ENCODE measurements at regions of chr20 and their contacts with region 1.

Region 1: GRCh38 chr20:63537525-63538203 is 488 bp upstream of the PTK6 start:
- DNase-seq: peak; percentile 97
- H3K4me3 ChIP-seq: peak overlapping the region in 1 of 2 experiments; percentile 29; a peak in 2 of 4 replicates
- H3K27ac ChIP-seq: peak overlapping the region in 1 of 2 experiments; percentile 76; a peak in 2 of 4 replicates
- H3K4me1 ChIP-seq: peaks cover 0 to 32% of the 10 kb centered on the region in 2 experiments; a peak in 1 of 4 replicates
- H3K27me3 ChIP-seq: no peaks in the 10 kb centered on the region
- CTCF ChIP-seq: peak; percentile 81
- EP300 ChIP-seq: no peak
- RAD21 ChIP-seq: peak; percentile 93

Region 2: GRCh38 chr20:62989201-62989601 is 548.5 kb before region 1 on chr20:
- CTCF ChIA-PET with region 1: no interaction called
- POLR2A ChIA-PET with region 1: no interaction called
- DNase-seq: no peak
- H3K4me3 ChIP-seq: peak overlapping the region in 1 of 2 experiments; percentile 3; a peak in 1 of 4 replicates
- H3K27ac ChIP-seq: no peak overlapping the region
- H3K4me1 ChIP-seq: no peaks in the 10 kb centered on the region
- H3K27me3 ChIP-seq: peaks cover 42% of the 10 kb centered on the region
- CTCF ChIP-seq: no peak
- EP300 ChIP-seq: no peak
- RAD21 ChIP-seq: no peak

Region 3: GRCh38 chr20:63129991-63130657 is 407.5 kb before region 1 on chr20:
- CTCF ChIA-PET with region 1: no interaction called
- POLR2A ChIA-PET with region 1: no interaction called
- DNase-seq: no peak
- H3K4me3 ChIP-seq: no peak overlapping the region
- H3K27ac ChIP-seq: no peak overlapping the region
- H3K4me1 ChIP-seq: no peaks in the 10 kb centered on the region
- H3K27me3 ChIP-seq: peaks cover 34% of the 10 kb centered on the region
- CTCF ChIP-seq: no peak
- EP300 ChIP-seq: no peak
- RAD21 ChIP-seq: no peak

Region 4: DNA sequence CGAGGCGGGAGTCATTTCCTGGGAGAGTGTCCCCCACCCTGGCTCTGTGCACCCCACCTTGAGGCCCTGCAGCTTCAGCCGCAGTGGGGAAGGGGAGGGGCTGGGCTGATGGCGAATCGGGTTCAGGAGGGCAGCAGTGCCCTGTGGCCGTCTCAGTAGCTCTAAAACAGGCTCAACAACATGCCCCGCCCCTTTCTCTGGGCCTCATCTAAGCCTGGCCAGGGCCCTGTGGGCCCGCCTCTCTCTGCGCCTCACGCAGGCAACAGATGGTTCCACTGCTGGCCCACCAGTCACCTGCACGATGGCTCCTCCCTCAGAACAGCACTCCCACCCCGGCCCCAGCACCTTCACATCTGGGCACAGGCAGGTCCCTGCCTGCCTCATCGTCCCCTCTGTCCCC is 206.7 kb before region 1 on chr20:
- CTCF ChIA-PET with region 1: no interaction called
- POLR2A ChIA-PET with region 1: no interaction called
- DNase-seq: no peak
- H3K4me3 ChIP-seq: no peak overlapping the region
- H3K27ac ChIP-seq: no peak overlapping the region
- H3K4me1 ChIP-seq: peaks cover 0 to 3% of the 10 kb centered on the region in 2 experiments; a peak in 1 of 4 replicates
- H3K27me3 ChIP-seq: no peaks in the 10 kb centered on the region
- CTCF ChIP-seq: no peak
- EP300 ChIP-seq: no peak
- RAD21 ChIP-seq: no peak

Region 5: DNA sequence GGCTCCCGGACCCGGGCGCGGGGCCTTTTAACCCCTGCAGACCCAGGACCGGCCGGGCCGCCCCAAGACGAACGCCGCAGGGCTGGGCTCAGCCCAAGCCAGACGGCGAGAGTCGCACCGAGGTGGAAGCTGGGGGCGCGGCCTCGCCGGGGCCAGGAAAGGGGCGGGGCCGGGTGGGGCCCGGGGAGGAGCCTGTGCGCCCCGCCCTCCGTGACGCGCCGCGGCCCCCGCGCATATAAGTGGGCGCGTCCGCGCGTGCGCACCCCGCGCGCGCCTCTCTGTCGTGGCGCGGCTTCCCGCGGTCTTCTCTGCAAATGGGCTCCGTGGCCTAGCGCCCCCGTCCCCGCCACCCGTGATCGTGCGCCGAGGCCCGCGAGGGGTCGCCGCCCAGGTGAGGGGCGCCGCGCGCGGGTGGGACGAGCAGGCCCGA is 17.1 kb before region 1 on chr20 and contains the start of gene PPDPF:
- CTCF ChIA-PET with region 1: interaction called, 82 read pairs
- POLR2A ChIA-PET with region 1: interaction called, 16 read pairs
- DNase-seq: peak; percentile 100
- H3K4me3 ChIP-seq: peak within 1 kb of the TSS; percentile 84 to 85
- H3K27ac ChIP-seq: peak within 1 kb of the TSS; percentile 66 to 81
- H3K4me1 ChIP-seq: peaks cover 4 to 26% of the 10 kb centered on the region in 2 experiments; a peak in 3 of 4 replicates
- H3K27me3 ChIP-seq: no peaks in the 10 kb centered on the region
- CTCF ChIP-seq: no peak
- EP300 ChIP-seq: no peak
- RAD21 ChIP-seq: no peak
- polyA plus RNA-seq, gene PPDPF: 20.0 and 71.4 TPM in 2 replicates

Region 6: GRCh38 chr20:63567386-63568169 is 29.9 kb after region 1 on chr20:
- CTCF ChIA-PET with region 1: interaction called, 12 read pairs
- POLR2A ChIA-PET with region 1: no interaction called
- DNase-seq: no peak
- H3K4me3 ChIP-seq: no peak overlapping the region
- H3K27ac ChIP-seq: no peak overlapping the region
- H3K4me1 ChIP-seq: no peaks in the 10 kb centered on the region
- H3K27me3 ChIP-seq: no peaks in the 10 kb centered on the region
- CTCF ChIP-seq: no peak
- EP300 ChIP-seq: no peak
- RAD21 ChIP-seq: no peak

Region 7: GRCh38 chr20:63594043-63594561 is 56.4 kb after region 1 on chr20:
- CTCF ChIA-PET with region 1: no interaction called
- POLR2A ChIA-PET with region 1: no interaction called
- DNase-seq: no peak
- H3K4me3 ChIP-seq: no peak overlapping the region
- H3K27ac ChIP-seq: no peak overlapping the region
- H3K4me1 ChIP-seq: no peaks in the 10 kb centered on the region
- H3K27me3 ChIP-seq: no peaks in the 10 kb centered on the region
- CTCF ChIP-seq: no peak
- EP300 ChIP-seq: no peak
- RAD21 ChIP-seq: no peak

Region 8: GRCh38 chr20:63653078-63653973 is 115.7 kb after region 1 on chr20 and contains the start of gene STMN3:
- CTCF ChIA-PET with region 1: interaction called, 27 read pairs
- POLR2A ChIA-PET with region 1: interaction called, 6 read pairs
- DNase-seq: peak; percentile 89
- H3K4me3 ChIP-seq: peak within 1 kb of the TSS; percentile 67 to 76
- H3K27ac ChIP-seq: peak within 1 kb of the TSS; percentile 60 to 97
- H3K4me1 ChIP-seq: peaks cover 8 to 26% of the 10 kb centered on the region in 2 experiments; a peak in 2 of 4 replicates
- H3K27me3 ChIP-seq: no peaks in the 10 kb centered on the region
- CTCF ChIP-seq: no peak
- EP300 ChIP-seq: no peak
- RAD21 ChIP-seq: no peak
- polyA plus RNA-seq, gene STMN3: 89.8 and 111 TPM in 2 replicates

Region 9: DNA sequence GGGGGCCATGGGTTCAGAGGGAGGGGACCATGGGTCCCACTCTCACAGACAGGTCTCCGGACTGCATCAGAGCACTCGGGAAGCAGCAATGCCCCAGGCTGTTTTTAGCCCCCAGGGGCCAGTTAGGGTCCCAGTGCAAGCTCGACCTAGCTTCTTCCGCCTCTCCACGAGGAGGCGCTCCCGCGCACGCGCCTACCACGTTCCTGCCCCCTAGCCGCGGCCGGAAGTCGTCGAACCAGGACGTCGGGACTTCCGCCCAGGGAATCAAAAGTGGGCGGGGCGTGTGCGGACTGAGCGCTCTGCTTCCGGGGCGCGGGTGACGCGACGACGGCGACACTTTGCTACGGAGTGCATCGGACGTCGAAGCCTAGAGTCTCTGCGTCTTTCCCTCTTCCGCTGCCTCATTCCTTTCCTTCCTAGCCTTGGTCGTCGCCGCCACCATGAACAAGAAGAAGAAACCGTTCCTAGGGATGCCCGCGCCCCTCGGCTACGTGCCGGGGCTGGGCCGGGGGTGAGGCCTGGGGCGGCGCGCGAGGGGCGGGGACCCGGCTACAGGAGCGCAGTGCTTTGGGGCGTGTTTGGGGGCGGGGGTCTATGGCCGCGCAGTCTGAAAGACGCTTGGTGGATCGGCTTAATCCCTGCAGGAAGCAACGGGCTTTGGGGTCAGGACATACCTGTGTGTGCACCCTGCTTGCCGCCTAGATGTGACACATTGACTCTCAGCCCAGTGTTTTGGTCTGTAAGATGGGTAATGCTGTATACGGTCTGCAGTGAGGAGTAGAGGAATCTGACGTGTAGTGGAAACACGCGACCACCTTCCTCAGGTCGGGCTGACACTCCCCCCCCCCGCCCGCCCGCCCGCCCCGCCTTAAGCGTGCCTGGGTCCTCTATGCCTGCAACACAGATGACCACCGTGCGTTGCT is 443.4 kb after region 1 on chr20 and contains the start of gene PRPF6:
- CTCF ChIA-PET with region 1: interaction called, 42 read pairs
- POLR2A ChIA-PET with region 1: interaction called, 3 read pairs
- DNase-seq: peak; percentile 98
- H3K4me3 ChIP-seq: peak within 1 kb of the TSS; percentile 77 to 98
- H3K27ac ChIP-seq: peak within 1 kb of the TSS; percentile 89 to 90
- H3K4me1 ChIP-seq: peaks cover 12 to 24% of the 10 kb centered on the region in 2 experiments
- H3K27me3 ChIP-seq: no peaks in the 10 kb centered on the region
- CTCF ChIP-seq: peak; percentile 81
- EP300 ChIP-seq: 0 out of 4 replicates have a peak, but pooled peaks of 1 of the 2 experiments have one; percentile 8
- RAD21 ChIP-seq: no peak; the same call in 1 of the 2 replicates
- polyA plus RNA-seq, gene PRPF6: 50.1 and 59.1 TPM in 2 replicates